Activated CD4-positive, alpha-beta memory T cell treated with anti-CD3 and anti-CD28 coated beads, Interleukin-2, amount 10 ng/mL, durations not matched to agents 7 days and 5 days (primary cell): ENCODE measurements at regions of chr11 and their contacts with region 1.

Region 1: DNA sequence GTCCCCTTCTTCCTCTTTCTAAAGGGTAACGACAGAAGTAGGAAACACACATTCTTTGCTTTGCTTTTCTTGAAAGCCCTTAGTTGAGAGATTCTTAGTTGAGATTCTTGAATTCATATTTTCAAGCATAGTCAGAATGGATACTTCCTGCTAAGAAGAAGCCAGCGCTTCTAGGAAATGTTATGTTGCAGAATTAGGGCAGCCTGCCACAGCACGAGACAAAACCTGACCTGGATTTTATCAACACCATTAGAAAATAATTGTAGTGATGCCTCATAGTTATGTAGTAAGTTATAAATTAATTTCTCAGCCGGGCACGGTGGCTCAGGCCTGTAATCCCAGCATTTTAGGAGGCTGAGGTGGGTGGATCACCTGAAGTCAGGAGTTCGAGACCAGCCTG is 37.9 kb upstream of the NUP160 start:
- DNase-seq: peak; percentile 45
- H3K4me3 Mint-ChIP-seq: peak overlapping the region; percentile 51
- H3K27ac Mint-ChIP-seq: peak overlapping the region; percentile 98
- H3K4me1 Mint-ChIP-seq: peaks cover 51% of the 10 kb centered on the region
- H3K27me3 Mint-ChIP-seq: no peaks in the 10 kb centered on the region

Region 2: DNA sequence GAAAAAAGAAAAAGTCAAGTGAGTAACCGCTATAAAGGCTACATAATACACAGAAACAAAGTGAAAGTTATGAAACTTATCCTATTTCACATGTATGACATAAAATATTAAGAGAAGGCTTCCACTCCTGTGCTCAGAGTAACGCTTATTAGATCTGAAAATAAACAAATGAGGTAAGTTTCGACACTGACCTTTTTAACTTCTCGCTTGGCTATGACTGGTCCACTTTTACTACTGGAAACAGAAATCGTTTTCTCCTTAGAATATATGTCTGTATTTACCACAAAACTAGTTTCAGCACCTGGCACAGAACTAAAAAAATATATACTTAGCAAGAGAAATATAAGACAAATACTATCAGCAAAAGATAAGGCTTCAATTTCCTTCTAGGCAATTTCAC is 135.4 kb before region 1 on chr11:
- CTCF ChIA-PET with region 1: no interaction called
- POLR2A ChIA-PET with region 1: no interaction called
- DNase-seq: no peak
- H3K4me3 Mint-ChIP-seq: no peak overlapping the region
- H3K27ac Mint-ChIP-seq: no peak overlapping the region
- H3K4me1 Mint-ChIP-seq: peaks cover 2% of the 10 kb centered on the region
- H3K27me3 Mint-ChIP-seq: no peaks in the 10 kb centered on the region

Region 3: GRCh38 chr11:47854667-47855066 is 31.4 kb before region 1 on chr11:
- CTCF ChIA-PET with region 1: interaction called, 10 read pairs
- POLR2A ChIA-PET with region 1: interaction called, 5 read pairs
- DNase-seq: no peak
- H3K4me3 Mint-ChIP-seq: no peak overlapping the region
- H3K27ac Mint-ChIP-seq: no peak overlapping the region
- H3K4me1 Mint-ChIP-seq: peaks cover 32% of the 10 kb centered on the region
- H3K27me3 Mint-ChIP-seq: no peaks in the 10 kb centered on the region

Region 4: GRCh38 chr11:47863189-47863892 is 22.8 kb before region 1 on chr11:
- CTCF ChIA-PET with region 1: interaction called, 4 read pairs
- POLR2A ChIA-PET with region 1: interaction called, 10 read pairs
- DNase-seq: no peak
- H3K4me3 Mint-ChIP-seq: no peak overlapping the region
- H3K27ac Mint-ChIP-seq: peak overlapping the region; percentile 72
- H3K4me1 Mint-ChIP-seq: peaks cover 36% of the 10 kb centered on the region
- H3K27me3 Mint-ChIP-seq: no peaks in the 10 kb centered on the region